ENCODE measurements at regions of chr13 and their contacts with region 1.

Region 1: DNA sequence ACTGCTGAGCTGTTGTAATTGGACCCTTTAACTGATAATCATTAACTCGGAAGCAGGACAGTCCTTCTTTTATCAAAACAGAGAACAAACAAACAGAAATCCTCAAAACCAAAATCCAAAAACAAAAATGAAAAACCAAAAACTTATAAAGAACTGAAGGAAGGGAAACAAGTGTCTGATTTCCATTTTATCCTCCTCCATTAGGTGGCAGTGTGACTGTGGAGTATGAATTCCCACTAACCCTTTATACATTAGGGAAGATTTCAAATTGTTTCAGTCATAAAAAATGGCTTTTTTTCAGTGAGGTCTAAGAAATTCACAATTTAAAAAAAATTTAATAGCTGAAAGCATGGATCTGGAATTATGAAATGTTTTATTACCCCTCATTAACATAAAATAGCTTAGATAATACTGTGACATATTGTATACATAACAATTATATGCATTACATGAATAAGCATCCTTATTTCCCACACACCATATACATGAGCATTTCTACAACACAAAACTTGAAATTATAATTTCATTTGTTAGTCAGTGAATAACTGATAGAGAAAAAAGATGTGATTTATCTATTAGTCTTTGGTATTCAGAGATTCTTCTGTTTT is 1074.3 kb upstream of the PCDH9 start:
- DNase-seq: peak; percentile 9
- H3K4me3 ChIP-seq: no peak overlapping the region
- H3K27ac ChIP-seq: no peak overlapping the region
- H3K4me1 ChIP-seq: no peaks in the 10 kb centered on the region
- H3K27me3 ChIP-seq: no peaks in the 10 kb centered on the region
- CTCF ChIP-seq: peak; percentile 61 to 70

Region 2: GRCh38 chr13:68369739-68370138 is 65.3 kb after region 1 on chr13:
- CTCF ChIA-PET with region 1: no interaction called
- dilution Hi-C with region 1: no loop called
- in situ Hi-C with region 1: no loop called
- intact Hi-C with region 1: no loop called
- DNase-seq: no peak
- H3K4me3 ChIP-seq: no peak overlapping the region
- H3K27ac ChIP-seq: no peak overlapping the region
- H3K4me1 ChIP-seq: no peaks in the 10 kb centered on the region
- H3K27me3 ChIP-seq: no peaks in the 10 kb centered on the region
- CTCF ChIP-seq: no peak

Region 3: GRCh38 chr13:68927387-68928026 is 623.1 kb after region 1 on chr13:
- CTCF ChIA-PET with region 1: no interaction called
- dilution Hi-C with region 1: no loop called
- in situ Hi-C with region 1: no loop called
- intact Hi-C with region 1: loop called (anchors 2 kb)
- DNase-seq: no peak
- H3K4me3 ChIP-seq: no peak overlapping the region
- H3K27ac ChIP-seq: no peak overlapping the region
- H3K4me1 ChIP-seq: no peaks in the 10 kb centered on the region
- H3K27me3 ChIP-seq: no peaks in the 10 kb centered on the region
- CTCF ChIP-seq: peak in 1 of 2 donors; percentile 54

Measured in mammary epithelial cell (primary cell).